BJ (cell line): ENCODE measurements at regions of chr2 and their contacts with region 1.

Region 1: GRCh38 chr2:164560181-164560792 is 61.0 kb downstream of the GRB14 start:
- DNase-seq: no peak
- H3K4me3 ChIP-seq: no peak overlapping the region
- H3K27me3 ChIP-seq: no peaks in the 10 kb centered on the region
- CTCF ChIP-seq: peak; percentile 68

Region 2: DNA sequence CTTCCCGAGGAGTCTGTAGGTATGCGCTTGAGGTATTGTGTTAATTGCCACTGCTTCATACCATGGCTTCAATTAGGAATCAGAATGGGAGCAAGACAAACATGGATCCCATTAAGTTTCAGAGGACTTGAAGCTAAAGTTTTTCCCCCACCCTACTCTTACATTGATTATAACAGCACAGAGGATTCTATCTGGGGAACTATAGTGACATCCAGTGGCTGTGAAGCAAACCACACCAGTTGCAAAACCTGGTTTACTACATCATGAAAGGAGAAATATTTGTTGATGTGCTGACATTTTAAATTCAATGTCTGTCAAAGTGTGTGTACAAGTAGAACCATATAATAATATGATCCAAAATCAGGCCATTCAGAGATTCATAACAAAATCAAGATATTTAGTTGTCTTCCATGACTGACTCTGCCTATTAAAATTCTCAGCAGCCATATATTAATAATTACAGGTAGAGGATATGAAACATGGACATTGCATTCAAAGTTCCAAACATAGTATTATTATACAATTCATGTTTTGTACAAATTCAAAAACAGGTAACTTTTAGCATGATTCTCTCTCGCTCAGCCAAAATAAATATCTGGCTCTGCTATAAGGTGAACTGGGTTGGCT is 21.9 kb before region 1 on chr2:
- CTCF ChIA-PET with region 1: interaction called, 10 read pairs
- POLR2A ChIA-PET with region 1: no interaction called
- DNase-seq: no peak
- H3K4me3 ChIP-seq: no peak overlapping the region
- H3K27me3 ChIP-seq: peaks cover 3% of the 10 kb centered on the region; the same call in 1 of the 2 replicates
- CTCF ChIP-seq: peak; percentile 76

Region 3: GRCh38 chr2:164599966-164600589 is 39.8 kb after region 1 on chr2:
- CTCF ChIA-PET with region 1: interaction called, 23 read pairs
- POLR2A ChIA-PET with region 1: no interaction called
- DNase-seq: peak; percentile 27
- H3K4me3 ChIP-seq: no peak overlapping the region
- H3K27me3 ChIP-seq: no peaks in the 10 kb centered on the region
- CTCF ChIP-seq: peak; percentile 78

Region 4: DNA sequence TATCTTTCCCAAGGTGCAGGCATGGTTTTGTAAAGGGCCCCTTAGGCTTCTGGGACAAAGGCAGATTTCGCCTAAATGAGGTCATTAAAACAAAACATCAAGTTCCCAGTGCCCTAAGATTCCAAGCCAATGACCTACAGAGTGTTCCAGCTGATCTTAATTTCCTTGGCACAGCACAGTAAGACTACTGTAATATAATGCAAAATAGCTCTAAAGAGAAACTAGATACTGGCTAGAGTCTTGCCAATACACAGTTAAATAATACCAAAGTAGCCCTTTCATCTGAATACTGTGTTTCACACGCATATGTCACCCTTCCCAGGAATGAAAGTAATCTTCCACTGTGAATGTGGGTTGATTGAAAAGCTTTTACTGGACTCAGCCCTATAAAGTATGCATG is 46.3 kb after region 1 on chr2:
- CTCF ChIA-PET with region 1: interaction called, 13 read pairs
- POLR2A ChIA-PET with region 1: no interaction called
- DNase-seq: peak; percentile 31
- H3K4me3 ChIP-seq: no peak overlapping the region
- H3K27me3 ChIP-seq: no peaks in the 10 kb centered on the region
- CTCF ChIP-seq: no peak

Region 5: DNA sequence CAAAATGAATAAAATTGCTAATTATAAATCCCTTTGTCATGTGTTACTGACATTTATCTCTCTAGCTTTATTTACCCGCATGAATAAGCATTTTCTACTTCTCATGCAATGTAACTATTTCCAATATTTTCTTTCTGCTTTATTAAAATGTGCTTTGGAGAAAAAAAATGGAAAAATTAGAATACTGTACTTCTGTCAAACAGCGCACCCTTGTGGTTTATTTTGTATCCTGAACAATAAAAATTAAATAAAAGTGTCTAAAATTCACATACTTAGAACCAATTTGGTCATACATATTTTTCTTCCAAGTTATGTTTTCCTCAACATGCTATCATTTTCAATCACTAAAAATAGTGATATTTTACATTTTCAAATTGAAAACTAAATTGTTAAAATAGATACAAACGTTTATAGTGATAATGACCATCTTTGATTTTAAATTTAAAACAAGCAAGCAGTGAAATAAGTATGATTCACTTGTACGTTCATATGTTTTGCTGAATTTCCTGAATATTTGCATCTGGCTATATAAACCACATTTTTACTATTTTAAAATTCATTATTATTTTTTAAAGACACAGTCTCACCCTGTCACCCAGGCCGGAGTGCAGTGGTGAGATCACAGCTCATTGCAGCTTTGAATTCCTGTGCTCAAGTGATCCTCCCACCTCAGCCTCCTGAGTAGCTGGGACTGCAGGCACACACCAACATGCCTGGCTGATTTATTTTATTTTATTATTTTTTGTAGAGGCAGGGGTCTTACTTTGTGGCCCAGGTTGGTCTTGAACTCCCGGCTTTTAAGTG is 156.9 kb after region 1 on chr2:
- CTCF ChIA-PET with region 1: interaction called, 10 read pairs
- POLR2A ChIA-PET with region 1: no interaction called
- DNase-seq: no peak
- H3K4me3 ChIP-seq: no peak overlapping the region
- H3K27me3 ChIP-seq: no peaks in the 10 kb centered on the region
- CTCF ChIP-seq: peak; percentile 40

Region 6: GRCh38 chr2:164859251-164859800 is 299.0 kb after region 1 on chr2:
- CTCF ChIA-PET with region 1: no interaction called
- POLR2A ChIA-PET with region 1: no interaction called
- DNase-seq: no peak
- H3K4me3 ChIP-seq: no peak overlapping the region
- H3K27me3 ChIP-seq: no peaks in the 10 kb centered on the region
- CTCF ChIP-seq: no peak